CD4-positive, alpha-beta memory T cell (primary cell): ENCODE measurements at regions of chr17 and their contacts with region 1.

Region 1: GRCh38 chr17:35214631-35215273 is 20.6 kb upstream of the SLC35G3 start:
- DNase-seq: peak in 3 of 5 donors; percentile 57 to 65 (median 58)
- H3K4me3 ChIP-seq: peak overlapping the region; percentile 38 to 51
- H3K4me3 Mint-ChIP-seq: peak overlapping the region; percentile 16 to 85 (median 79)
- H3K27ac ChIP-seq: peak overlapping the region; percentile 60
- H3K27ac Mint-ChIP-seq: peak overlapping the region; percentile 87 to 97 (median 94)
- H3K4me1 ChIP-seq: peaks cover 93% of the 10 kb centered on the region
- H3K4me1 Mint-ChIP-seq: peaks cover 70 to 91% (median 79%) of the 10 kb centered on the region in 4 donors
- H3K27me3 ChIP-seq: no peaks in the 10 kb centered on the region
- H3K27me3 Mint-ChIP-seq: no peaks in the 10 kb centered on the region

Region 2: GRCh38 chr17:35141681-35142466 is 72.9 kb before region 1 on chr17 and contains the start of gene NLE1:
- CTCF ChIA-PET with region 1: no interaction called
- POLR2A ChIA-PET with region 1: interaction called, 8 read pairs
- intact Hi-C with region 1: loop called (anchors 1 kb)
- DNase-seq: peak; percentile 85 to 89 (median 87)
- H3K4me3 ChIP-seq: peak within 1 kb of the TSS; percentile 80 to 99
- H3K4me3 Mint-ChIP-seq: peak within 1 kb of the TSS; percentile 82 to 91 (median 88)
- H3K27ac ChIP-seq: peak within 1 kb of the TSS; percentile 77
- H3K27ac Mint-ChIP-seq: peak within 1 kb of the TSS; percentile 72 to 91 (median 78)
- H3K4me1 ChIP-seq: peaks cover 14% of the 10 kb centered on the region
- H3K4me1 Mint-ChIP-seq: peaks cover 8 to 32% (median 20%) of the 10 kb centered on the region in 4 donors
- H3K27me3 ChIP-seq: no peaks in the 10 kb centered on the region
- H3K27me3 Mint-ChIP-seq: no peaks in the 10 kb centered on the region
- total RNA-seq, gene NLE1: 20.1 to 20.5 TPM

Region 3: GRCh38 chr17:35170968-35171771 is 43.6 kb before region 1 on chr17:
- CTCF ChIA-PET with region 1: interaction called, 17 read pairs
- POLR2A ChIA-PET with region 1: interaction called, 48 read pairs
- intact Hi-C with region 1: loop called (anchors 2 kb)
- DNase-seq: peak; percentile 41 to 75 (median 72)
- H3K4me3 ChIP-seq: peak overlapping the region in 1 of 2 donors; percentile 18
- H3K4me3 Mint-ChIP-seq: peak overlapping the region; percentile 51 to 81 (median 68)
- H3K27ac ChIP-seq: no peak overlapping the region
- H3K27ac Mint-ChIP-seq: peak overlapping the region; percentile 82 to 93 (median 91)
- H3K4me1 ChIP-seq: peaks cover 41% of the 10 kb centered on the region
- H3K4me1 Mint-ChIP-seq: peaks cover 32 to 60% (median 42%) of the 10 kb centered on the region in 4 donors
- H3K27me3 ChIP-seq: no peaks in the 10 kb centered on the region
- H3K27me3 Mint-ChIP-seq: no peaks in the 10 kb centered on the region

Region 4: GRCh38 chr17:35189291-35189690 is 25.5 kb before region 1 on chr17:
- CTCF ChIA-PET with region 1: interaction called, 8 read pairs
- POLR2A ChIA-PET with region 1: interaction called, 36 read pairs
- intact Hi-C with region 1: loop called (anchors 2 kb)
- DNase-seq: no peak
- H3K4me3 ChIP-seq: no peak overlapping the region
- H3K4me3 Mint-ChIP-seq: peak overlapping the region in 3 of 8 donors; percentile 22 to 62 (median 52)
- H3K27ac ChIP-seq: no peak overlapping the region
- H3K27ac Mint-ChIP-seq: peak overlapping the region in 4 of 7 donors; percentile 17 to 62 (median 44)
- H3K4me1 ChIP-seq: peaks cover 38% of the 10 kb centered on the region
- H3K4me1 Mint-ChIP-seq: peaks cover 39 to 76% (median 43%) of the 10 kb centered on the region in 4 donors
- H3K27me3 ChIP-seq: no peaks in the 10 kb centered on the region
- H3K27me3 Mint-ChIP-seq: no peaks in the 10 kb centered on the region

Region 5: DNA sequence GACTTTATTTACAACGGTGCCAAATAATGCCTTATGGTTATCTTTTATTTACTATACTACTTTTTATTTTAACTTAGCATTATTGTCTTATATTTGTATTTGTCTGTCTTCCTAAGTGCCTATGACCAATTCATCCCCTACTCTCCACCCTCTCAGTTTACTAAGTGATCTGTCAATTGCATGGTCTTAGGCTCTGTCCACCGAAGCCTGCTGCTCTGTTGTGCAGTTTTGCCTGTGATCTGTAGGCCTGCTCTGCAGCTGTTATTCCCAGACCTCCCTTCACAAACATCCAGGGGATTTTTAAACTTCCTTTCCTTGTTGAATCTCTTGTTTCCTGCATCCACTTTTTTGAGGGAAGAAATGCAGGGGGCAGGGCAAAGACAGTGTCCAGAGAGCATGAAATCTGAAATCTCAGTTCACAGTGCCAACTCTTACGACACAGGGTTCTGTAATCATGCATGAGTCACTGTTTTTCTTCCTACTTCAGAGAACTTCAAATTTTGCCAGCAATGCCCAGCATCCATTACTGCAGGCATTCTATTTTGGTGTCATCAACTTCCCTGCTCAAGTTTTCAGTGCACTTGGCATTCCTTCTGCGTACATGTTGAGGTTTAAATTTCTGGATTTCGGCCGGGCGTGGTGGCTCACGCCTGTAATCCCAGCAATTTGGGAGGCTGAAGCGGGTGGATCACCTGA is 39.5 kb after region 1 on chr17:
- CTCF ChIA-PET with region 1: interaction called, 3 read pairs
- POLR2A ChIA-PET with region 1: interaction called, 18 read pairs
- intact Hi-C with region 1: no loop called
- DNase-seq: no peak
- H3K4me3 ChIP-seq: no peak overlapping the region
- H3K4me3 Mint-ChIP-seq: peak overlapping the region in 6 of 8 donors; percentile 9 to 67 (median 34)
- H3K27ac ChIP-seq: no peak overlapping the region
- H3K27ac Mint-ChIP-seq: peak overlapping the region; percentile 43 to 91 (median 87)
- H3K4me1 ChIP-seq: peaks cover 93% of the 10 kb centered on the region
- H3K4me1 Mint-ChIP-seq: peaks cover 60 to 93% (median 76%) of the 10 kb centered on the region in 4 donors
- H3K27me3 ChIP-seq: no peaks in the 10 kb centered on the region
- H3K27me3 Mint-ChIP-seq: no peaks in the 10 kb centered on the region

Region 6: GRCh38 chr17:35519439-35519838 is 304.7 kb after region 1 on chr17:
- CTCF ChIA-PET with region 1: no interaction called
- POLR2A ChIA-PET with region 1: interaction called, 13 read pairs
- intact Hi-C with region 1: no loop called
- DNase-seq: peak in 1 of 5 donors; percentile 57
- H3K4me3 ChIP-seq: peak overlapping the region in 1 of 2 donors; percentile 23
- H3K4me3 Mint-ChIP-seq: peak overlapping the region; percentile 17 to 83 (median 68)
- H3K27ac ChIP-seq: peak overlapping the region; percentile 0
- H3K27ac Mint-ChIP-seq: peak overlapping the region; percentile 27 to 91 (median 72)
- H3K4me1 ChIP-seq: peaks cover 74% of the 10 kb centered on the region
- H3K4me1 Mint-ChIP-seq: peaks cover 71 to 98% (median 86%) of the 10 kb centered on the region in 4 donors
- H3K27me3 ChIP-seq: no peaks in the 10 kb centered on the region
- H3K27me3 Mint-ChIP-seq: no peaks in the 10 kb centered on the region

Region 7: GRCh38 chr17:35540589-35541404 is 326.0 kb after region 1 on chr17:
- CTCF ChIA-PET with region 1: interaction called, 7 read pairs
- POLR2A ChIA-PET with region 1: interaction called, 105 read pairs
- intact Hi-C with region 1: loop called (anchors 1 kb)
- DNase-seq: peak in 4 of 5 donors; percentile 43 to 54 (median 50)
- H3K4me3 ChIP-seq: peak overlapping the region; percentile 60 to 79
- H3K4me3 Mint-ChIP-seq: peak overlapping the region; percentile 87 to 98 (median 92)
- H3K27ac ChIP-seq: peak overlapping the region; percentile 74
- H3K27ac Mint-ChIP-seq: peak overlapping the region; percentile 80 to 98 (median 95)
- H3K4me1 ChIP-seq: peaks cover 45% of the 10 kb centered on the region
- H3K4me1 Mint-ChIP-seq: peaks cover 32 to 62% (median 45%) of the 10 kb centered on the region in 4 donors
- H3K27me3 ChIP-seq: no peaks in the 10 kb centered on the region
- H3K27me3 Mint-ChIP-seq: no peaks in the 10 kb centered on the region